ENCODE measurements at regions of chr11 and their contacts with region 1.

Region 1: GRCh38 chr11:57644748-57645688 is 4.7 kb downstream of the YPEL4 start:
- DNase-seq: peak; percentile 93
- ATAC-seq: peak; percentile 79
- H3K4me3 Mint-ChIP-seq: no peak overlapping the region
- H3K27ac Mint-ChIP-seq: no peak overlapping the region
- H3K4me1 Mint-ChIP-seq: peaks cover 33% of the 10 kb centered on the region
- H3K27me3 Mint-ChIP-seq: peaks cover 47% of the 10 kb centered on the region

Region 2: GRCh38 chr11:57345555-57346211 is 299.3 kb before region 1 on chr11:
- CTCF ChIA-PET with region 1: interaction called, 22 read pairs
- POLR2A ChIA-PET with region 1: no interaction called
- intact Hi-C with region 1: loop called (anchors 1 to 2 kb)
- DNase-seq: peak; percentile 84
- ATAC-seq: peak; percentile 87
- H3K4me3 Mint-ChIP-seq: no peak overlapping the region
- H3K27ac Mint-ChIP-seq: peak overlapping the region; percentile 52
- H3K4me1 Mint-ChIP-seq: peaks cover 5% of the 10 kb centered on the region
- H3K27me3 Mint-ChIP-seq: no peaks in the 10 kb centered on the region

Region 3: DNA sequence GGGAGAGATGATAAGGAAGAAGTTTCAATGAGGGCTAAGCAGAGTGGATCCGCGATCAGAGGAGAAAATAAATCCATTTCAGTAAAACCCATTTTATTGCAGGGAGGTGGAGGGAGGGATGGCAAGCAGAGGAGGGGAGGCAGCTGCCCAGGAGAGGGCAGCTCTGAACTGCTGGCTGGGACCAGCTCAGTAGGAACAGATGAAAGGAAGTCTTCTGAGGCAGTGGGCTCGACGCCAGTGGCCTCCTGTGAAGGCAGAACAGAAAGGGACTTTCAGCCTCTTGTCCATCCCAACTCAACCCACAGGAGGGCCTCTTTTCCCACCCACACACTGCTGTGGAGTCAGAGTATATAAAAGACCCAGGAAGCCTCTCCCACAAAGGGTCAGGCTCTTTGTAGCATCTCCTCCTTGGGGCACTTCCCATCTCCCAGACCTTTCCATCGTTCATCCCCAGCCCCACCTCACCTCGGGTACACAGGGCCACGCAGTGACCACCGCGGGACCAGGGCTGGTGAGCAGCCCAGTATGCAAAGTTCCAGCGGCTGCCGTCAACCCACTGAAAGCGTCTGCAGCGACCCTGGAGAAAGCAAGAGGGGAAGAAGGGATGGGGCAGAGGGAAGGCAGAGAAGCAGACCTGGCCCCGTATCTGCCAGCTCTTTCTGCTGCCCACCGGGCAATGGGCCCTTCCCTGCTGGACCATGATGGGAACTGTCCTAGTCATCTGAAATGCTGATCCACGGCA is 257.6 kb before region 1 on chr11:
- CTCF ChIA-PET with region 1: no interaction called
- POLR2A ChIA-PET with region 1: no interaction called
- intact Hi-C with region 1: no loop called
- DNase-seq: no peak
- ATAC-seq: no peak
- H3K4me3 Mint-ChIP-seq: no peak overlapping the region
- H3K27ac Mint-ChIP-seq: no peak overlapping the region
- H3K4me1 Mint-ChIP-seq: no peaks in the 10 kb centered on the region
- H3K27me3 Mint-ChIP-seq: no peaks in the 10 kb centered on the region

Region 4: DNA sequence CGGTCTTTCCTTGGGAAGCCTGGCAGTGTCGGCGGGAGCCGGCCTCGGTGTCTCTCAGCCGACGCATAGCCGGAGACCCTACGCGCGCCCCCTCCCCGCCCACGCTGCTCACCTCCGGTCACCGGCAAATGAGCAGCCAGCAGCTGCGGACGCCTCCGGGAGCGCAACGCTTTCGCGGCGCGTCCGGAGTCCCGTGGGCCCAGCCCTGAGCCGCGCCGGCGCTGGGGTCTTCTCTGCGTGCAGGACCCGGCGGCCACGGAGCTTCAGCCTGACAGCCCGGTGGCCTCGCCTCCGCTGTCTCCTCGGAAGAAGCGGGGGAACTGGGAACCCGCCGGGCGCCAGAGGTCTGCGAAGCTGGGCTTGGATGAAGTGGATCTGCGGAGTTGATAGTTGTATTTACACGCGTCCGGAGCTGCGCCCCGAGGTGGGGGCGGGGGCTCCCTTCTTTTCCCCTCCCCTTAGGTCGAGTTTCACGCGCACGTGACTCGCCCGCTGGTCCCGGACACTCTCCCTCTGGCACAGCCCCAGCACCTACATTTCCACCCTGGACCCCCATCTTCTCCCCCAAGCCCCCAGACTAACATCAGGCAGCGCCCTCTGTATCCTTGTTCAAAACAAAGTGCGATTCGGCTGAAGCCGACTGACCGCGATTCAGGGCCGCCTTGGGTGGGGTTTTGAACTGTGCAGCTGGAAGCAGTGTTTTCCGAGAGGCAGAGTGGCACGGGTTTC is 129.5 kb before region 1 on chr11 and contains the start of gene SLC43A1:
- CTCF ChIA-PET with region 1: interaction called, 10 read pairs
- POLR2A ChIA-PET with region 1: no interaction called
- intact Hi-C with region 1: no loop called
- DNase-seq: peak; percentile 62
- ATAC-seq: peak; percentile 46
- H3K4me3 Mint-ChIP-seq: peak within 1 kb of the TSS; percentile 91
- H3K27ac Mint-ChIP-seq: peak within 1 kb of the TSS; percentile 91
- H3K4me1 Mint-ChIP-seq: peaks cover 31% of the 10 kb centered on the region
- H3K27me3 Mint-ChIP-seq: no peaks in the 10 kb centered on the region
- total RNA-seq, gene SLC43A1: 27.6 to 28.7 TPM

Region 5: DNA sequence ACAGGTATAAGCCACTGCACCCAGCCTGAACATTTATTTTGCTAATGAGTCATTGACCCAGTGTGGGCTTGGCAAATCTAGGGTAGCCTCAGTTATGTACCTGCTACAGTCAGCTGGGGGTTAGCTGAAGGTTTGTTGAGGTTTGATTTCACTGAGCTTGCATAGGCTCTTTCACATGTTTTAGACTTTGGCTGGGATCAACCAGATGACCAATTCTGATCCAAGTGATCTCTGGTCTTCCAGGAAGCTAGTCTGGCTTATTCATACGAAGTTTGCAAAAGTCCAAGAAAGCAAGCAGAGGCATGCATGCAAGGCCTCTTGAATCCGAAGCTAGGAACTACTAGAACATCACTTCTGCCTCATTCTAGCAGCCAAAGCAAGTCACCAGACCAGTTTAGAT is 26.6 kb before region 1 on chr11:
- CTCF ChIA-PET with region 1: interaction called, 11 read pairs
- POLR2A ChIA-PET with region 1: interaction called, 3 read pairs
- intact Hi-C with region 1: no loop called
- DNase-seq: no peak
- ATAC-seq: no peak
- H3K4me3 Mint-ChIP-seq: no peak overlapping the region
- H3K27ac Mint-ChIP-seq: no peak overlapping the region
- H3K4me1 Mint-ChIP-seq: no peaks in the 10 kb centered on the region
- H3K27me3 Mint-ChIP-seq: peaks cover 7% of the 10 kb centered on the region

Region 6: GRCh38 chr11:57630193-57630592 is 14.8 kb before region 1 on chr11:
- CTCF ChIA-PET with region 1: interaction called, 23 read pairs
- POLR2A ChIA-PET with region 1: no interaction called
- intact Hi-C with region 1: no loop called
- DNase-seq: no peak
- ATAC-seq: no peak
- H3K4me3 Mint-ChIP-seq: no peak overlapping the region
- H3K27ac Mint-ChIP-seq: no peak overlapping the region
- H3K4me1 Mint-ChIP-seq: no peaks in the 10 kb centered on the region
- H3K27me3 Mint-ChIP-seq: peaks cover 12% of the 10 kb centered on the region

Region 7: DNA sequence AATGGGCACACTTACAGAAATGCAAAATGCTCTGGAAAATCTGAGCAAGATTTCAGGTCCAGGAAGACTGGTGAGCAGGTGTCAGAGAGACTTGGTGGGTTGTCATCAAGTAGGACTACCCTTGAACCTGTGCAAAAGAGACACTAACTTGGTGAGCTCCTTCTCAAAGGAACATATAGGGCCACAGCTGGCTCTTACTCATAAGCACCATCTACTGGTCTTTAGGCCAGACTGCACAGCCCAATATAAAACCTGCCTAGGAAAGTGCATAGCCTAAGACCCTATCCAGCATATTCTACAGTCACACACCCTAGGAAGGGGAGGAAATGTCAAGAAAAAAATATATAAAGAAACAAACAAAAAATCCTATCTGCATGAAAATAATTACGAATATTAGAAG is 641.2 kb after region 1 on chr11:
- CTCF ChIA-PET with region 1: no interaction called
- POLR2A ChIA-PET with region 1: no interaction called
- intact Hi-C with region 1: no loop called
- DNase-seq: peak; percentile 11
- ATAC-seq: peak; percentile 69
- H3K4me3 Mint-ChIP-seq: no peak overlapping the region
- H3K27ac Mint-ChIP-seq: no peak overlapping the region
- H3K4me1 Mint-ChIP-seq: no peaks in the 10 kb centered on the region
- H3K27me3 Mint-ChIP-seq: peaks cover 13% of the 10 kb centered on the region

Measured in activated CD4-positive, alpha-beta T cell treated with anti-CD3 and anti-CD28 coated beads for 36 hours (primary cell).